ENCODE measurements at regions of chr18 and their contacts with region 1.

Region 1: DNA sequence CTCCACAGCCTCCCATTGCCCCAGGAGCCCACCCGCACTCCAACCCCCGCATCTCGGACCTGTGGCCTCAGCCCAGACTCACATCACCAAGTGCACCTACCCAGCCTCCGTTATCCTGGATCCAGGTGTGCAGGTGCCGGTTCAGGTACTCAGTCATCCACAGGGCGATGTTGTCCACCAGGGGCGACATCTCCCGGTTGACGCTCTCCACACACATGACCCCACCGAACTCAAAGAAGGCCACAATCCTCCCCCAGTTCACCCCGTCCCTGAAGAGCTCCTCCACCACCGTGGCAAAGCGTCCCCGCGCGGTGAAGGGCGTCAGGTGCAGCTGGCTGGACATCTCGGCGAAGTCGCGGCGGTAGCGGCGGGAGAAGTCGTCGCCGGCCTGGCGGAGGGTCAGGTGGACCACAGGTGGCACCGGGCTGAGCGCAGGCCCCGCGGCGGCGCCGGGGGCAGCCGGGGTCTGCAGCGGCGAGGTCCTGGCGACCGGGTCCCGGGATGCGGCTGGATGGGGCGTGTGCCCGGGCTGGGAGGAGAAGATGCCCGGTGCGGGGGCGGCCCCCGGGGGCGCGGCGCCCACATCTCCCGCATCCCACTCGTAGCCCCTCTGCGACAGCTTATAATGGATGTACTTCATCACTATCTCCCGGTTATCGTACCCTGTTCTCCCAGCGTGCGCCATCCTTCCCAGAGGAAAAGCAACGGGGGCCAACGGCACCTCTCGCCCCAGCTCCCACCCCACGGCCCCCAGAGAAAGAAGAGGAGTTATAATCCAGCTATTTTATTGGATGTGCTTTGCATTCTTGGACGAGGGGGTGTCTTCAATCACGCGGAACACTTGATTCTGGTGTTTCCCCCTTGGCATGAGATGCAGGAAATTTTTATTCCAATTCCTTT is 1.3 kb downstream of the BCL2 start:
- DNase-seq: peak; percentile 51
- H3K4me3 ChIP-seq: peak overlapping the region; percentile 63 to 65
- H3K27ac ChIP-seq: peak overlapping the region; percentile 62 to 66
- H3K4me1 ChIP-seq: no peaks in the 10 kb centered on the region
- H3K27me3 ChIP-seq: no peaks in the 10 kb centered on the region
- CTCF ChIP-seq: peak; percentile 46 to 88 (median 66)
- POLR2A ChIP-seq: no peak

Region 2: GRCh38 chr18:63016270-63016669 is 302.0 kb before region 1 on chr18:
- intact Hi-C with region 1: loop called (anchors 2 kb)
- DNase-seq: peak; percentile 28
- H3K4me3 ChIP-seq: no peak overlapping the region
- H3K27ac ChIP-seq: no peak overlapping the region
- H3K4me1 ChIP-seq: no peaks in the 10 kb centered on the region
- H3K27me3 ChIP-seq: no peaks in the 10 kb centered on the region
- CTCF ChIP-seq: peak; percentile 63 to 76 (median 72)
- POLR2A ChIP-seq: no peak

Region 3: DNA sequence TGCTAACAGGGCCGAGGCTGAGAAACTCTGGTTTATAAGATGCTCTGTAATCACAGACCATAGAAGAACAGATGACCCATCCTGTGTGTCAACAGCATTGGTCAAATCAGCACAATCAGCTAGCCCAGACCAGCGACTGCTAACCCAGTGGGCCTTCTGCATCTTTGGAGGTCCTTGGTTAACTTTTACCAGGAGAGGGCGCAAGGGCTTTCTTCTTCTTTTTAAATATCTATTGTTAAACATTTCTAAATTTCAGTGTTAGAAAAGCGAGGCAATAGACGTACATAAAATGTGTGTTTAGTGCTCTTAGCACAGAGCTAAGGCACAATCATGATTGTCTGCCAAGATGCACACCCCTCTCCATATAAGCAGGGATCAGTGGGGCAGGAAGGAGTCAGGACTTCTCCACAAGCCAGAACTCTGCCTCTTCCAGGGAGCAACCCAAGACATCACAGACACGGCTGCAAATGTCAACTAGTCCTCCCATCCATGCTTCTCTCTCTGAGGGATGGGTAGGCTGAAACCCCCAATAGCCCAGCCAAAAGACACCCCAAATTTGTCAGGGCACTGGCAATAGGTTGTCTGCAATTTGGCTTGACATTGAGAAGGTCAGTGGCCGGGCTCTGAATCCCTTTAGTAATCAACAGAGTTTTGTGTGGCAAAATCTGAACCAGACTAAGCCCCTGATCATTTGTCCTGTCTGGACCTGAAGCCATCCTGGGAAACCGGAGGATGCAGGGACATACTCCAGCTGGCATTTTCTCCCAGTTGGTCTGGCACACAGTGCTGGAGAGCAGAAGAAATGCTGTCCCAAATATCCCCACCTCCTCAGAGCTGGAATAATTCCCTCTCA is 186.9 kb before region 1 on chr18:
- intact Hi-C with region 1: loop called (anchors 2 kb)
- DNase-seq: peak; percentile 68
- H3K4me3 ChIP-seq: no peak overlapping the region
- H3K27ac ChIP-seq: peak overlapping the region in 1 of 2 donors; percentile 42
- H3K4me1 ChIP-seq: peaks cover 12% of the 10 kb centered on the region
- H3K27me3 ChIP-seq: no peaks in the 10 kb centered on the region
- CTCF ChIP-seq: peak; percentile 51 to 72 (median 68)
- POLR2A ChIP-seq: no peak

Region 4: GRCh38 chr18:63177919-63178821 is 140.1 kb before region 1 on chr18:
- intact Hi-C with region 1: loop called (anchors 5 kb)
- DNase-seq: peak; percentile 73
- H3K4me3 ChIP-seq: peak overlapping the region in 1 of 2 donors; percentile 2
- H3K27ac ChIP-seq: peak overlapping the region; percentile 79 to 80
- H3K4me1 ChIP-seq: peaks cover 6% of the 10 kb centered on the region
- H3K27me3 ChIP-seq: no peaks in the 10 kb centered on the region
- CTCF ChIP-seq: no peak
- POLR2A ChIP-seq: no peak

Region 5: GRCh38 chr18:63237881-63238667 is 80.2 kb before region 1 on chr18:
- intact Hi-C with region 1: loop called (anchors 5 kb)
- DNase-seq: peak; percentile 56
- H3K4me3 ChIP-seq: no peak overlapping the region
- H3K27ac ChIP-seq: peak overlapping the region; percentile 58 to 84
- H3K4me1 ChIP-seq: no peaks in the 10 kb centered on the region
- H3K27me3 ChIP-seq: no peaks in the 10 kb centered on the region
- CTCF ChIP-seq: no peak
- POLR2A ChIP-seq: peak; percentile 43

Region 6: DNA sequence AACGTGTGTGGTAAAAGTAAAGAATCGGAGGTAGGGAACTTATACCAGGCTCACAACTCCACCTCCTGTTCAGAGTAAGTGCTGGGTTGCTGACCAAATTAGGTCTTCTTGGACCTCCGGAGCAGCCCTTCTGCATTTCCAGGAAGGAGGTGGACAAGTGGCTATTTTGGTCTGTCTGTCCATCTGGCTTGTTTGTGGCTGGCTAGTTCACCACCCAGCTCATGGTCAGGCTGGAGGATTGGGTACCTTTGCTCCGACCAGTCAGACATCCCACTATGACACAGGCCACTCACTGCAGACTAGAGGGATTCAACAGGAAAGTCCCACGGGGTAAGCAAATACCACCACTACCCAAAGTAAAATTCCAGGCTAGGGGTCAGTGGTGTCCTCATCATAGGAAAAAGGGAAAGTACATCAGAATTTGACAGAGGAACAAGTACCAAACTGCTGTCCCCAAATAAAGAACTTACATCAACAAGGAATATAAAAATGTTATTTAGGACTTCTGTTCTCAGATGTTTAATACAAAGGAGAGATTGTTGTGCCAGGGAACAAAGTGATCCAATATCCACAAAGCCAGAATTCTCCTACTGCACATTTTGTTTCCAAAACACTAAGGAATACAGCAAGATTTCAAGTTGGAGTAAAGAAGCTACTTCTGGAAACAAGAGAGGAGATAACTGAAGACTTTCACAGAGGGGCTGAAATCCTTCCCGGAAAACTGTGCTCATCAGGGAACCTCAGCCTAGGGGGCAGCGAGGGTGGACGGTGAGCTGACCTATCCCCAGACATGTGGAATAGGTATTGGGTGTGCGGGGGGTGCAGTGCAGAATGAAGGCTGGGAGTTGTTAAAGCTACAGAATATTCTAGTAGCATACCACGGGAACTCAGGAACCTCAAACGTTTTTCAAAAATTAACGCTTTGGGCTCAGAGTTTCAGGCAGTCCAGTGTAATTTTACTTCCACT is 55.6 kb before region 1 on chr18:
- intact Hi-C with region 1: loop called (anchors 2 kb)
- DNase-seq: no peak
- H3K4me3 ChIP-seq: no peak overlapping the region
- H3K27ac ChIP-seq: peak overlapping the region; percentile 55 to 63
- H3K4me1 ChIP-seq: peaks cover 10% of the 10 kb centered on the region
- H3K27me3 ChIP-seq: no peaks in the 10 kb centered on the region
- CTCF ChIP-seq: no peak
- POLR2A ChIP-seq: no peak

Region 7: DNA sequence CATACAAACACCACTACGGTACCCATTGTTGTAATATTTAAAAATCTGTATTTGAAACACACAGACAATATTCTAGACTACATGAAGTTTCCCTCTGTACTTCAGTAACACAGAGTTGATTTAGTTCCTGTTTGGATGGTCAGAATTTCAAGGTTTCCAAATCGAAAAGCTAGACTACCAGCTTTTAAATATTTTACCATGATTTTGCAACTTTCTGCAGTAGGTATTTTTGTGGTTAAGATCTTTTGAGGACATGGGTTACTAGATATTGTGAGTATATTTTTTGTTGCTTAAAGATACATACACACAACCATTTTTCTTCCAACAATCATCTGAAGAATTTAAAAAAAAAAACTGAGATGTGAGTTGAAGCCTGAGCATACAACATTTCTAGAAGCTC is 169.4 kb after region 1 on chr18:
- intact Hi-C with region 1: no loop called
- DNase-seq: no peak
- H3K4me3 ChIP-seq: no peak overlapping the region
- H3K27ac ChIP-seq: no peak overlapping the region
- H3K4me1 ChIP-seq: no peaks in the 10 kb centered on the region
- H3K27me3 ChIP-seq: no peaks in the 10 kb centered on the region
- CTCF ChIP-seq: no peak
- POLR2A ChIP-seq: no peak